Tibial artery (tissue), 4 donors: ENCODE measurements at regions of chr16 and their contacts with region 1.

Region 1: DNA sequence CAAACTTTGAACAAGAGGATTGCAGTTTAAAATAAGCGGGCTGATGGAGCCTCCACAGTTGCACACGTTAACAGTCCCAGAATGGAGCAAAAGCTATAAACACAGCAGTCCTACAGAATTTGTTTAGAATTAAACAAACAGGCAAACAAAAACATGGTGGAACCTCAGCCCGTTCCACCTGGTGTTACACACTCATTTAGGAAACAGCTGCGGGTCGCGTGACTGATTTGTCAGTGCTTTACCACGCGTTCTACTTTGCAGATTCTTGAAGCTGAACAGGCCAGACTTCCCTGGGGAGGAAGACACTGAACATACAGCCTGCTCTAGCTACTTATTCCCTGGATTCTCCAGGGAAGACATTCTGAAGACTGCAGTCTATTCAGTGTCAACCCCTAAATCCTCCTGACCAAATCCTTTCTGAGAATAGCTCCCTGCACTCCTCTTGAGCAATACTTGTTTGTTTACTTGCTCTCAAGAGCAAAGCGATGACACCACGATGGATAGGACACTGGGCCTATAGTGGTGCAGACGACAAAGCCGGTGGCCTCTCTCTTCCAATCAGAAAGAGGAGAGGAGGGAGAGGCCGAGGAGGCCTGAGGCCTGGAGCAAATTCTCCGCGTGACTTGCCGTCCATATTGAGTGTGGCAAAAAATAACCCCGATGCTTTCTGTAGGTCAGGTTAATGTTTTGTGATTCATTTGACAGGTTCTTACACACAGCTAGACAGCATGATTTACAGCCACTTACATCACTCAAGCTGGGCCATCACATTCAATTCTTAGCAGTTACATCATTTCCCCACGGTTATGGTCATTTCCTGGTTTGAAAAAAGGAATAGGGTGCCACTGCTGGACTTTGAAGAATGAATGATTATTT is 4.0 kb upstream of the MAP1LC3B start:
- DNase-seq: peak; percentile 96 to 98
- H3K4me3 ChIP-seq: peak overlapping the region; percentile 12 to 19
- H3K27ac ChIP-seq: peak overlapping the region; percentile 82 to 84
- H3K4me1 ChIP-seq: peaks cover 0 to 34% (median 20%) of the 10 kb centered on the region in 4 donors
- H3K27me3 ChIP-seq: no peaks in the 10 kb centered on the region
- CTCF ChIP-seq: no peak

Region 2: GRCh38 chr16:85554112-85554813 is 1833.9 kb before region 1 on chr16:
- intact Hi-C with region 1: loop called (anchors 10 kb)
- DNase-seq: peak; percentile 84 to 91
- H3K4me3 ChIP-seq: peak overlapping the region; percentile 90 to 91
- H3K27ac ChIP-seq: peak overlapping the region; percentile 87 to 95
- H3K4me1 ChIP-seq: peaks cover 0 to 62% (median 28%) of the 10 kb centered on the region in 4 donors
- H3K27me3 ChIP-seq: no peaks in the 10 kb centered on the region
- CTCF ChIP-seq: no peak

Region 3: GRCh38 chr16:86261379-86261778 is 1126.8 kb before region 1 on chr16:
- intact Hi-C with region 1: no loop called
- DNase-seq: no peak
- H3K4me3 ChIP-seq: no peak overlapping the region
- H3K27ac ChIP-seq: no peak overlapping the region
- H3K4me1 ChIP-seq: no peaks in the 10 kb centered on the region
- H3K27me3 ChIP-seq: peaks cover 0 to 24% of the 10 kb centered on the region in 2 donors
- CTCF ChIP-seq: no peak

Region 4: DNA sequence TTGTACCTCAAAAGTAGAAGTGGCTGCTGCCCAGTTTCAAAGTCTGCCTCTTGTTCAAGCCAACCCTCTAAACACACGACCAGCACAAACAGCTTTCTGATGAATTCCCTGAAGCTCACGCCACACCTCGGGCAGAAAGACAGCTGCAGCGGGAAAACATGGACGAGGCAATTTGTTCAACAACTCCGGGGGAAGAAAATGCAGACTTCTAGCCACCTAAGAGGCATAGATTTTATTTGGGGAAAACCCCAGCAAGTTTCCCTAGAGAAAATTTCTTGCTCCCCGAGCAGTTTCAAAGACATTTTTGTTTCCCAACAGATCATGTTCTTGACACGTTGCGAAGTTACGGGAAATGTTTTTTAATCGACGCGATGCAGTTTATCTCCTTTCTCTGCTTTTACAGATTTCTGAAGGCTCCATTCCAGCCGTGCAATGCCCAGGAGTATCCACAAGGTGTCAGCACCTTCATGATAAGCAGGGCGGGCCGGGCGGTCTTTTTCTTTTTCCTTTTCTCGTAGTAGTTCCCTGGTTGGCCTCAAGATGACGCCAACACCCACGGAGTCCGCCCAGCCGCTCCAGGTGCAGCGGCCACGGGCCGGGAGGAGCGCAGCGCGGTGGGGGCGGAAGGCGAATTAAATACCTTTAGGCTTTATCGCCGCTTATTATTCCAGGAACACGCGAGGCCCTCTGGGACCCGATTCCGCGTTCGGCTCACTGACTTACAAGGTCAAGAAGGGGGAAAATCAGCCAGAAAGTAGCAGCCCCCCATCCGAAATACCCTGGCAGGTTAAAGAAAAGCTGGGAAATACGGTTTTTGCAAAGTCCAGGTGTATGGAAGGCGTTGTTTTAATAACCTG is 824.5 kb before region 1 on chr16:
- intact Hi-C with region 1: loop called (anchors 5 kb)
- DNase-seq: peak; percentile 95
- H3K4me3 ChIP-seq: peak overlapping the region; percentile 81 to 86
- H3K27ac ChIP-seq: peak overlapping the region; percentile 95 to 97
- H3K4me1 ChIP-seq: peaks cover 0 to 18% (median 8%) of the 10 kb centered on the region in 4 donors
- H3K27me3 ChIP-seq: no peaks in the 10 kb centered on the region
- CTCF ChIP-seq: peak; percentile 100

Region 5: GRCh38 chr16:87316923-87317749 is 71.0 kb before region 1 on chr16 and contains the start of gene C16orf95:
- intact Hi-C with region 1: loop called (anchors 5 kb)
- DNase-seq: peak; percentile 96 to 98
- H3K4me3 ChIP-seq: peak within 1 kb of the TSS; percentile 90 to 99
- H3K27ac ChIP-seq: peak within 1 kb of the TSS; percentile 87 to 95
- H3K4me1 ChIP-seq: peaks cover 0 to 14% (median 9%) of the 10 kb centered on the region in 4 donors
- H3K27me3 ChIP-seq: no peaks in the 10 kb centered on the region
- CTCF ChIP-seq: peak; percentile 45 to 72

Region 6: GRCh38 chr16:87492721-87493607 is 104.8 kb after region 1 on chr16 and contains the start of gene ZCCHC14:
- intact Hi-C with region 1: loop called (anchors 2 kb)
- DNase-seq: peak; percentile 99 to 100
- H3K4me3 ChIP-seq: peak within 1 kb of the TSS; percentile 64 to 68
- H3K27ac ChIP-seq: peak within 1 kb of the TSS; percentile 73
- H3K4me1 ChIP-seq: peaks cover 0 to 46% (median 37%) of the 10 kb centered on the region in 4 donors
- H3K27me3 ChIP-seq: no peaks in the 10 kb centered on the region
- CTCF ChIP-seq: peak in 1 of 2 experiments; percentile 21

Region 7: DNA sequence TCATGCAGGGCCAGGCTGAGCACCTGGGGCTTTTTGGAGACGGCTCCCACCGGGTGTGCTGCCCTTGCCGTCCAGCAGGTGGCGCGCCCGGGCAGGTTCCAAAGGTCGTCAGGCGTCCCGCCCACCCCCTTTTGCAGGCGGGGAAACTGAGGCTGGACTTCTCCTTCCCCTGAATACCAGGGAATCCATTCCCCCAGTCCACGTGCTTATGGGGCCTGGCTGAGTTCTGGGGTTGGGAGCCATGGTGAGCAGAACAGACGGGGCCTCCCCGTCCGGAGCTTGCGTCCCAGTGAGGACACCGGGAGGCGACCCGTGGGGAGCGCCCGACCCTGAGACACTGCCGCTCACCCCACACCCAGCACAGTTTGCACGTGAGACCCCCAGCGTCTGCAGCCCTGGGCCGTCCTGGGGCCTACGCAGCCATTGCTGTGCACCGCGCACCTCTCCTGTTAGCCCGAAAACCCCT is 162.3 kb after region 1 on chr16:
- intact Hi-C with region 1: loop called (anchors 10 kb)
- DNase-seq: no peak
- H3K4me3 ChIP-seq: no peak overlapping the region
- H3K27ac ChIP-seq: no peak overlapping the region
- H3K4me1 ChIP-seq: peaks cover 0 to 10% (median 3%) of the 10 kb centered on the region in 4 donors
- H3K27me3 ChIP-seq: no peaks in the 10 kb centered on the region
- CTCF ChIP-seq: peak; percentile 86 to 96

Region 8: GRCh38 chr16:88045820-88046303 is 657.7 kb after region 1 on chr16:
- intact Hi-C with region 1: no loop called
- DNase-seq: no peak
- H3K4me3 ChIP-seq: no peak overlapping the region
- H3K27ac ChIP-seq: no peak overlapping the region
- H3K4me1 ChIP-seq: no peaks in the 10 kb centered on the region
- H3K27me3 ChIP-seq: no peaks in the 10 kb centered on the region
- CTCF ChIP-seq: no peak